CD4-positive, alpha-beta T cell (primary cell): ENCODE measurements at regions of chr10 and their contacts with region 1.

Region 1: DNA sequence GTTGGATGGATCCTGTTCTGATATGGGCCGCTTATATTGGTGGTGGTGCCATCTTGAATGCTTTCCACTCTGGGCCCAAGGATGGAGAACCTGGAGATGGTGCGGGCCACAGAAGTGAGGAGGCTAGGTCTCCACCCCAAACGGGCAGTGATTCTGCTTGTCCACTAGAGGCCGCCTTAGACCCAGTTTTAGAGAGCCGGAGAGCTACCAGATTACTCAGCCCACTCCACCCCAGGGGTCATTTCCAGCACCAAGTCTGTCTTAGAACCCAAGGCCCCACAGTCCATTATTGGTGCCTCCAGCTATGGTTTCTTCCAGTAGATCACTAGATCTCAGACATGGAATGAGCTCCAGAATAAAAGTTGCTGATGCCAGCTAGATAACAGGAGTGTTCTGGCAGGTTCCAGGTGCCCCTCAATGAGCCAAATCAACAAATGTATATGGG is 11.8 kb upstream of the CAMK2G start:
- DNase-seq: peak; percentile 47 to 86 (median 58)
- ATAC-seq: peak; percentile 97
- H3K4me3 ChIP-seq: no peak overlapping the region
- H3K4me3 Mint-ChIP-seq: no peak overlapping the region
- H3K27ac ChIP-seq: no peak overlapping the region
- H3K27ac Mint-ChIP-seq: no peak overlapping the region
- H3K4me1 ChIP-seq: peaks cover 7% of the 10 kb centered on the region
- H3K4me1 Mint-ChIP-seq: peaks cover 10% of the 10 kb centered on the region
- H3K27me3 ChIP-seq: no peaks in the 10 kb centered on the region
- H3K27me3 Mint-ChIP-seq: no peaks in the 10 kb centered on the region
- CTCF ChIP-seq: peak; percentile 89

Region 2: DNA sequence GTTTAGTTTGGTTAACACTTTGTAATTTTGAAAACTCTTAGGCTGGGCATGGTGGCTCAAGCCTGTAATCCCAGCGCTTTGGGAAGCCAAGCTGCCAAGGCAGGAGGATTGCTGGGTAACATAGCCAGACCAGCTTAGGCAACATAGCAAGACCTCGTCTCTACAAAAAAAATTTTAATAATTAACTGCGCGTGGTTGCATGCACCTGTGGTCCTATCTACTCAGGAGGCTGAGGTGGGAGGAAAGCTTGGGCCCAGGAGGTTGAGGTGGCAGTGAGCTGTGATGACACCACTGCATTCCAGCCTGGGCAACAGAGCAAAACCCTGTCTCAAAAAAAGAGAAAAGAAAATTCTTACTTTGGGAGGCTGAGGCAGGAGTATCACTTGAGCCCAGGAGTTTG is 263.1 kb before region 1 on chr10:
- CTCF ChIA-PET with region 1: no interaction called
- POLR2A ChIA-PET with region 1: no interaction called
- intact Hi-C with region 1: no loop called
- DNase-seq: no peak
- ATAC-seq: no peak
- H3K4me3 ChIP-seq: no peak overlapping the region
- H3K4me3 Mint-ChIP-seq: no peak overlapping the region
- H3K27ac ChIP-seq: no peak overlapping the region
- H3K27ac Mint-ChIP-seq: no peak overlapping the region
- H3K4me1 ChIP-seq: peaks cover 17% of the 10 kb centered on the region
- H3K4me1 Mint-ChIP-seq: peaks cover 25% of the 10 kb centered on the region
- H3K27me3 ChIP-seq: no peaks in the 10 kb centered on the region
- H3K27me3 Mint-ChIP-seq: no peaks in the 10 kb centered on the region
- CTCF ChIP-seq: no peak

Region 3: GRCh38 chr10:73991884-73992245 is 105.8 kb after region 1 on chr10:
- CTCF ChIA-PET with region 1: no interaction called
- POLR2A ChIA-PET with region 1: no interaction called
- intact Hi-C with region 1: no loop called
- DNase-seq: peak; percentile 64 to 94 (median 74)
- ATAC-seq: peak; percentile 100
- H3K4me3 ChIP-seq: no peak overlapping the region
- H3K4me3 Mint-ChIP-seq: peak overlapping the region; percentile 32
- H3K27ac ChIP-seq: peak overlapping the region in 1 of 2 donors; percentile 44
- H3K27ac Mint-ChIP-seq: peak overlapping the region; percentile 46
- H3K4me1 ChIP-seq: peaks cover 40% of the 10 kb centered on the region
- H3K4me1 Mint-ChIP-seq: peaks cover 56% of the 10 kb centered on the region
- H3K27me3 ChIP-seq: no peaks in the 10 kb centered on the region
- H3K27me3 Mint-ChIP-seq: no peaks in the 10 kb centered on the region
- CTCF ChIP-seq: no peak

Region 4: DNA sequence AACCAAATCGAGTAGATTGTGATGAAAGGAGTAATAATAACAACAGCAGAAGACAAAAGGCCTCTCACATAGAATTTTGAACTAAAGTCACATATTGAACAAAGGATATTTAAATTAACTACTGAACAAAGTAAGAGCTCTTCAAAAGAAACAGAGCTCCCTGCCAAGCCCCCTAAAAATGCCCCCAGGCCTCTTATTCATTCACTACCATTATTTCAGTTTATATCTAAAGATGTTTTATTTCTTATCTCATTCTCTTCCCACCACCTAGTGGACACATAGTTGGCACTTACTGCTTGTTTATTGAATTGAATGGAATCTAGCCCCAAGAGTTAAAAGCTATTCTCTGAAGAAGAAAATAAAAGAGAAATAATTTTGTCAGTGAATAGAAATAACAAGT is 149.2 kb after region 1 on chr10:
- CTCF ChIA-PET with region 1: no interaction called
- POLR2A ChIA-PET with region 1: no interaction called
- intact Hi-C with region 1: loop called (anchors 1 kb)
- DNase-seq: peak in 3 of 14 experiments; percentile 27 to 37 (median 27)
- ATAC-seq: no peak
- H3K4me3 ChIP-seq: no peak overlapping the region
- H3K4me3 Mint-ChIP-seq: no peak overlapping the region
- H3K27ac ChIP-seq: no peak overlapping the region
- H3K27ac Mint-ChIP-seq: peak overlapping the region; percentile 64
- H3K4me1 ChIP-seq: peaks cover 9% of the 10 kb centered on the region
- H3K4me1 Mint-ChIP-seq: peaks cover 52% of the 10 kb centered on the region
- H3K27me3 ChIP-seq: no peaks in the 10 kb centered on the region
- H3K27me3 Mint-ChIP-seq: no peaks in the 10 kb centered on the region
- CTCF ChIP-seq: peak; percentile 39

Region 5: DNA sequence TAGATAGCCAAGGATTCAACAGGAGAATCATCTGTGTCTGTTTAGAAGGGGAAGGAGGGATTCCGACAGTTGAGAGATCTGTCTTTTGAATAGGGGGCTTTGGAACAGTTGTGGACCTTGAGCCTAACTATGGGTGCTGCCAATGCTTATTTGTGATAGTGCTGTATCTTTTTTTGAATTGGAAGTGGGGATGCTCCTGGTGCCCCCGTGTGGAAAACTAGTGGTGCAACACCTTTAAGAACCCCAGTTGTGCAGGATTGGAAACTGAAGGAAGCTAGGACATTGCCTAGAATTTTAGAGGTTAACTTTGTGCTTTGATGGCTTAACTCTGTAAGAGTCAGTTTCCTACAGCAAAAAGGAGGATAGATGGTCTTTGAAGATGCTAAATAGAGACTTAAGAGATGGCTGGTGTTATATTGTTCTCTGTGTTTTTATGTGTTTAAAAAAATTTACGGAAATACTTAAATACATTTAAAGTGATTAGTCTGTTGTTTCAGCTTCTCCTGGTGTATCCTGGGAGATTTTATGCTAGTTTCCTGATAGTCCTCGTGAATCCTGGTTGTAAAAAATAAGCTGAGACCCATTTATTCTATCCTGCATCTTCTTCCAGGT is 195.2 kb after region 1 on chr10:
- CTCF ChIA-PET with region 1: interaction called, 18 read pairs
- POLR2A ChIA-PET with region 1: interaction called, 12 read pairs
- intact Hi-C with region 1: loop called (anchors 1 kb)
- DNase-seq: peak in 13 of 14 experiments; percentile 6 to 71 (median 20)
- ATAC-seq: peak; percentile 84
- H3K4me3 ChIP-seq: no peak overlapping the region
- H3K4me3 Mint-ChIP-seq: no peak overlapping the region
- H3K27ac ChIP-seq: no peak overlapping the region
- H3K27ac Mint-ChIP-seq: no peak overlapping the region
- H3K4me1 ChIP-seq: no peaks in the 10 kb centered on the region
- H3K4me1 Mint-ChIP-seq: peaks cover 15% of the 10 kb centered on the region
- H3K27me3 ChIP-seq: no peaks in the 10 kb centered on the region
- H3K27me3 Mint-ChIP-seq: no peaks in the 10 kb centered on the region
- CTCF ChIP-seq: peak; percentile 82